GM12878 (cell line): ENCODE measurements at regions of chr13 and their contacts with region 1.

Region 1: GRCh38 chr13:33146843-33147611 is 130.8 kb downstream of the KL start:
- DNase-seq: peak; percentile 98
- ATAC-seq: peak; percentile 63
- H3K4me3 ChIP-seq: no peak overlapping the region
- H3K27ac ChIP-seq: peak overlapping the region; percentile 98
- H3K4me1 ChIP-seq: peaks cover 59% of the 10 kb centered on the region
- H3K27me3 ChIP-seq: no peaks in the 10 kb centered on the region
- CTCF ChIP-seq: no peak
- EP300 ChIP-seq: peak; percentile 99
- POLR2A ChIP-seq: no peak
- RAD21 ChIP-seq: peak; percentile 37; the same call in 1 of the 2 replicates

Region 2: DNA sequence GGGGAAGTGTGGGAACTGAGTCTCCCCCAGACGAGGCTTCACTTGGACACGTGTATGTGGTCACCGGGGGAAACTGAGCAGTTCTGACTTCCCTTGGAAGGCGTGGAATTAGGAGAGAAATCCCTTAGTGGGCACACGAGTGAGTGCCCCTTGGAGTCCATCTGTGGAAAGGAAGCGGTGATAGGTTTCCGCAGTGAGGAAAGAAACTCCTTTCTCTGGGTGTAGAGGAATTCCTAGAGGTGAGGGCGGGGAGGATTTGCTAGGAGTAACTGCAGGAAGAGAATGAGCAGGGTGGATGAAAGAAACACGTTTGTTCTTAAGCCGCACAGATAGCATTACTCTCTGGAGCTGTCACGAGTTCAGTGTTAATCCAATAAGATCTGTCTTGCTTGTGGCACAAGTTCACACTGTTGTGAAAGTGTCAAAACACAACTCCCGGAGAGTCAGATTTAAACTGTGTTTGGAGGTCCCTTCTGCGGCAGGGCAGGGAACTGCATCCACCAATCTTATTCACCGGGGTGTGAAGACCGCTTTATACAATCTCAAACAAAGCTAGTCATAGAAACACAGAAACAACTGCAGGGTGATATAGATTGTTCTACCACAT is 129.6 kb before region 1 on chr13:
- CTCF ChIA-PET with region 1: interaction called, 3 read pairs
- POLR2A ChIA-PET with region 1: no interaction called
- RAD21 ChIA-PET with region 1: interaction called, 4 read pairs
- SMC1A ChIA-PET with region 1: interaction called, 3 read pairs
- in situ Hi-C with region 1: no loop called
- intact Hi-C with region 1: loop called (anchors 1 kb)
- DNase-seq: peak; percentile 65
- ATAC-seq: peak; percentile 88
- H3K4me3 ChIP-seq: peak overlapping the region; percentile 69
- H3K27ac ChIP-seq: no peak overlapping the region
- H3K4me1 ChIP-seq: peaks cover 12% of the 10 kb centered on the region
- H3K27me3 ChIP-seq: peaks cover 0 to 6% of the 10 kb centered on the region in 2 experiments; a peak in 1 of 4 replicates
- CTCF ChIP-seq: peak; percentile 66 to 82 (median 74); a peak in 5 of 6 replicates
- EP300 ChIP-seq: peak in 1 of 2 experiments; percentile 24; a peak in 1 of 4 replicates
- POLR2A ChIP-seq: no peak
- RAD21 ChIP-seq: peak; percentile 83

Region 3: DNA sequence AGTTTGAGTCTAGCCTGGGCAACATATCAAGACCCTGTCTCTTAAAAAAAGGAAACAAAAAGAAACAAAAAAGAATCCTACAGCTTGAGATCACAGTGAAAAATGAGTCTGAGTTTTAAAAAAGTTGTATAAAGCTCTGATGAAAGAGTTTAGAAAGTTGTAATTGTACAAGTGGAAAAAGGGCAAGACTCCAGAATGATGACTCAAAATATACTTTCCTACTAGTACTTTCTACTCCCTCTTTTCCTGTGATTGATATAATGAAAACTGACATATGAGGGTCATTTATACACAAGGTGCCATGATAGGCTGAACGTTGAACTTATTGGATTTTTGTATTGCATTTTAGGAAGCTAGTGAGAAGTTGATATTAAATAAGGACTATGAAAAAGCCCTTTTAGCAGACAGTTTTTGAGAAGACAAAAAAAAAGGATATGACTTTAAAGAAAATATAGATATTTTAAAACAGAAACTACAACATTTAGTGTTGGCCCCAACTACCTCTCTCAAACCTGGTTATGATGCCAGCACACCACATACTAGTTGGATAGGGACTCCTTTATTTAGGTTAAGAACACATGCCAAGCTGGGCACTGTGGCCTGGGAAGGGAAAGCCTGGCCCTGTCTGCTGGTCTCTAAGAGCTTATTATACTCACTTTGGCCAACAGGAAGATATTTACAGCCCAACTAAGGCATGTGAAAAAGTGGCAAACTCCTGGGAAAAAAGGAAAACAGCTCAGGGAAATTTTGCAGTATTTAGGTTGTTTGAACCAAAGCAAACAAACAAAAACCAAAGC is 14.2 kb before region 1 on chr13:
- CTCF ChIA-PET with region 1: interaction called, 4 read pairs
- POLR2A ChIA-PET with region 1: interaction called, 5 read pairs
- RAD21 ChIA-PET with region 1: interaction called, 15 read pairs
- SMC1A ChIA-PET with region 1: interaction called, 12 read pairs
- in situ Hi-C with region 1: no loop called
- intact Hi-C with region 1: no loop called
- DNase-seq: no peak
- ATAC-seq: no peak
- H3K4me3 ChIP-seq: no peak overlapping the region
- H3K27ac ChIP-seq: no peak overlapping the region
- H3K4me1 ChIP-seq: no peaks in the 10 kb centered on the region
- H3K27me3 ChIP-seq: no peaks in the 10 kb centered on the region
- CTCF ChIP-seq: no peak
- EP300 ChIP-seq: no peak
- POLR2A ChIP-seq: no peak
- RAD21 ChIP-seq: no peak

Region 4: GRCh38 chr13:33188093-33188882 is 41.3 kb after region 1 on chr13:
- CTCF ChIA-PET with region 1: interaction called, 36 read pairs
- POLR2A ChIA-PET with region 1: interaction called, 343 read pairs
- RAD21 ChIA-PET with region 1: interaction called, 91 read pairs
- SMC1A ChIA-PET with region 1: interaction called, 832 read pairs
- in situ Hi-C with region 1: loop called (anchors 5 kb)
- intact Hi-C with region 1: loop called (anchors 2 kb)
- DNase-seq: peak; percentile 79
- ATAC-seq: peak; percentile 75
- H3K4me3 ChIP-seq: peak overlapping the region; percentile 24; the same call in 1 of the 2 replicates
- H3K27ac ChIP-seq: peak overlapping the region; percentile 93
- H3K4me1 ChIP-seq: peaks cover 31% of the 10 kb centered on the region
- H3K27me3 ChIP-seq: no peaks in the 10 kb centered on the region
- CTCF ChIP-seq: no peak
- EP300 ChIP-seq: peak; percentile 49 to 56
- POLR2A ChIP-seq: no peak
- RAD21 ChIP-seq: peak; percentile 13; the same call in 1 of the 2 replicates

Region 5: DNA sequence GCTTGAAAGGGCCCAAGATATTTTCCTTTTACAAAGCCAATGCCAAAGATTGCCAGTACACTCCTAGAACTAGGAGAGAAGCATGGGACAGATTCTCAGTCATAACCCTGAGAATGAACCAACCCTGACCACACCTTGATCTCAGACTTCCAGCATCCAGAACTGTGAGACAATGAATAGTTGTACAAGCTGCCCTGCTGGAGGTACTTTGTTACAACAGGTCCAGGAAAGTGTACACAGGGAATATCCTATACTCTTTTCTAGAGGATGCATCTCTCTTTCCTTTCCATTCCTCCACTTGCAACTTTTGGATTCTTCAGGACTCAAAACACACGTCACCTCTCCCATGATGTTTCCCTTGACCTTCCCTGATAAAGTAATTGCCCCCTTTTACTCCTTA is 996.6 kb after region 1 on chr13:
- CTCF ChIA-PET with region 1: no interaction called
- POLR2A ChIA-PET with region 1: no interaction called
- RAD21 ChIA-PET with region 1: no interaction called
- SMC1A ChIA-PET with region 1: no interaction called
- in situ Hi-C with region 1: no loop called
- intact Hi-C with region 1: no loop called
- DNase-seq: no peak
- ATAC-seq: no peak
- H3K4me3 ChIP-seq: no peak overlapping the region
- H3K27ac ChIP-seq: no peak overlapping the region
- H3K4me1 ChIP-seq: no peaks in the 10 kb centered on the region
- H3K27me3 ChIP-seq: no peaks in the 10 kb centered on the region
- CTCF ChIP-seq: no peak
- EP300 ChIP-seq: no peak
- POLR2A ChIP-seq: no peak
- RAD21 ChIP-seq: no peak